Prostate gland (tissue), 2 donors: ENCODE measurements at regions of chr2 and their contacts with region 1.

Region 1: DNA sequence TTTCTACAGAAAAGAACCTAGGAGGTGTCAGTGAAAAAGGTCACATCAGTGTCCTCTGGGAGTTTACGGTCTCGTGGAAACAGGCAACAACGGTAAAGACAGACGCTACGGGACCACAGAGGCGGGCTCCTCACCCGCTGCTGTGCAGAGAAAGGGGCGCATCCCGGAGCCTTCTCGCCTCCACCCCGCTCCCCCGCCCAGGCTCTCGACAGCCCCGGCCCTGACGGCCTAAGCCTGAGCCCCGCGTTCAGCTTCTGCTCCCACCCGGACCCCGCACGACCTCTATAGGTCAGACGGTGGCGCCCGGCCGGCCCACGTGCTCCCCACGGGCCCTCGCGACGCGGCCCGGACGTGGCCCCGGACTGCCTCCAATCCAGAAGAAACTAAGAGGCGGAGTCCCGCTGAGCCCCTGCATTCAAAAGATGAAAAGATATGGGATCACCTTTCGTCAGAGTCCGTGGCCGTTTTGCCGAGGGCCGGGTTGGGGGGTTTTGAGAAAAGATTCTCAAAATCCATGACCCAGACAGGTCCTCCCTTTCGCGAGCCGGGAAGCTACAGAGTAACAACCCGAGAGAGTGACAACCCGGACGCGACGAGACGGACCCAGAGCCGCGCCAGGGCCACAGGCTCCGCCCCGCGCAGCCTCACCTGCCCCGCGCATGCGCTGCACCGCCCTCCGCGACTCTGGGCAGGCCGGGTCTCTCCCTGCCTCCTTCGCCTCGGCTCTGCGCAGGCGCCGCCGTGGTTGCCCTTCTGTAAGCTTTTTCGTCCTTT is at the start of gene ZC3H8:
- DNase-seq: peak; percentile 92
- H3K4me3 ChIP-seq: peak within 1 kb of the TSS; percentile 55 to 73
- H3K27ac ChIP-seq: peak within 1 kb of the TSS; percentile 84 to 85
- H3K4me1 ChIP-seq: peaks cover 6% of the 10 kb centered on the region
- H3K27me3 ChIP-seq: no peaks in the 10 kb centered on the region
- CTCF ChIP-seq: no peak
- POLR2A ChIP-seq: peak; percentile 84
- total RNA-seq, gene ZC3H8: 3.3 to 4.9 TPM

Region 2: GRCh38 chr2:112121682-112122254 is 132.9 kb before region 1 on chr2:
- intact Hi-C with region 1: loop called (anchors 10 kb)
- DNase-seq: no peak
- H3K4me3 ChIP-seq: no peak overlapping the region
- H3K27ac ChIP-seq: no peak overlapping the region
- H3K4me1 ChIP-seq: no peaks in the 10 kb centered on the region
- H3K27me3 ChIP-seq: no peaks in the 10 kb centered on the region
- CTCF ChIP-seq: peak in 3 of 4 experiments; percentile 32 to 65 (median 57)
- POLR2A ChIP-seq: no peak